ENCODE measurements at regions of chr3 and their contacts with region 1.

Region 1: GRCh38 chr3:189148081-189148507 is 23.7 kb upstream of the TPRG1 start:
- H3K4me3 Mint-ChIP-seq: no peak overlapping the region
- H3K27ac Mint-ChIP-seq: no peak overlapping the region
- H3K4me1 Mint-ChIP-seq: peaks cover 23% of the 10 kb centered on the region
- H3K27me3 Mint-ChIP-seq: peaks cover 4% of the 10 kb centered on the region

Region 2: GRCh38 chr3:188830893-188831292 is 317.2 kb before region 1 on chr3:
- intact Hi-C with region 1: loop called (anchors 5 kb)
- H3K4me3 Mint-ChIP-seq: no peak overlapping the region
- H3K27ac Mint-ChIP-seq: peak overlapping the region; percentile 37
- H3K4me1 Mint-ChIP-seq: peaks cover 47% of the 10 kb centered on the region
- H3K27me3 Mint-ChIP-seq: no peaks in the 10 kb centered on the region

Region 3: DNA sequence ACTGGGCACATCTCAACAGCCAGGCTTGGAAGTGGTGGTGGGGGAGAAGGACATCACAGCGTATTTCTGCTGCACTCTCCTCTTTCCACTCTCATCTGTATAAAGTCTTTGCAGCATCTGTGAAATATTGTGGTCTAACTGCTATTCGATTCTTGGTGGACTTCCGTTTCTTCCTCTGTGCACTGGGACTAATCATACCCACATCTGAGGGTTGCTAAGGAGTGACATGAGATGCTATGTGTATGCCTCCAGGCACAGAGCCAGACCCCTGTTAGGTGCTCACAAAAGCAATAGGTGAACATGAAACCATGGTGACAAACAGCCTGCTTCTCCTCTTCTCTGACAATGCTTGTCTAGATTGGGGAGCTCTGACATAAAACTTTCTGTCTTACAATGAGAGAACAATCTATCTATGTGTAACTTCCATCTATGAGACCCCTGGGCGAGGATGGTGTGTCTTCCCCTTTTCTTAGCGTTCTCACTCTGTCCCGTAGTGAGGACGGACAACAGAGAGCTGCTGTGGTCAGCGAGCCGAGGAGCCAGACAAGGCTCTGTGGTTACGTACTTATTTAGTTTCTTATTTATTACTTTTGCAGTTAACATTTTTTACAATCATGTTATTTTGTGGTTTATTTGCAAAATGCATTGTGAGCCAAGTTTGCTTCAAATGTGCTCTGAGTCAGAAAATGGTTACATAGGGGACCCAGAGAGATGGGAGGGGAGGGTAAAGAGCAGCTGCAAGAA is 173.1 kb before region 1 on chr3:
- intact Hi-C with region 1: loop called (anchors 5 kb)
- H3K4me3 Mint-ChIP-seq: no peak overlapping the region
- H3K27ac Mint-ChIP-seq: no peak overlapping the region
- H3K4me1 Mint-ChIP-seq: peaks cover 39% of the 10 kb centered on the region
- H3K27me3 Mint-ChIP-seq: peaks cover 13% of the 10 kb centered on the region

Region 4: DNA sequence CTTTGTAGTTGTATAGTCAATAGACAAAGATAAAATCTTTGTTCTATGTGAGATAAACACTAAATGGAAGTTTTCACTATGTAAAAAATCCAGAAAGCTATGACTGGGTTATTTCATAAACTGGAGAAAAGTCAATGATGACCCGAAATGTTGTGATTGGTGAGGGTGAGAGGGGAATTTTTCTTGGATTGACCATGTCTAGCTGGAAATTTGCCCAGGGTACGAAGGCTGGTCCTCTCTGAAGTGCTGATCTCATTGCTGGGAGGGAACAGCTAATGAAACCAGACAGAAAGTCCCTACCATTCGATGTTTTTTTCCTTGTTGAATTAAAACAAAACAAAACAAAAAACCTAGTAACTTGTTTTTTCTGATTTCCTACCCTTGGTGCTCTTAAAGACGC is 38.0 kb after region 1 on chr3:
- intact Hi-C with region 1: no loop called
- H3K4me3 Mint-ChIP-seq: no peak overlapping the region
- H3K27ac Mint-ChIP-seq: no peak overlapping the region
- H3K4me1 Mint-ChIP-seq: no peaks in the 10 kb centered on the region
- H3K27me3 Mint-ChIP-seq: no peaks in the 10 kb centered on the region

Measured in dendritic cell treated with granulocyte-macrophage colony-stimulating factor and Interleukin-4, amounts not matched to agents 40 ng/mL and 50 ng/mL, for 4 days (primary cell).